ENCODE measurements at regions of chr11 and their contacts with region 1.

Region 1: DNA sequence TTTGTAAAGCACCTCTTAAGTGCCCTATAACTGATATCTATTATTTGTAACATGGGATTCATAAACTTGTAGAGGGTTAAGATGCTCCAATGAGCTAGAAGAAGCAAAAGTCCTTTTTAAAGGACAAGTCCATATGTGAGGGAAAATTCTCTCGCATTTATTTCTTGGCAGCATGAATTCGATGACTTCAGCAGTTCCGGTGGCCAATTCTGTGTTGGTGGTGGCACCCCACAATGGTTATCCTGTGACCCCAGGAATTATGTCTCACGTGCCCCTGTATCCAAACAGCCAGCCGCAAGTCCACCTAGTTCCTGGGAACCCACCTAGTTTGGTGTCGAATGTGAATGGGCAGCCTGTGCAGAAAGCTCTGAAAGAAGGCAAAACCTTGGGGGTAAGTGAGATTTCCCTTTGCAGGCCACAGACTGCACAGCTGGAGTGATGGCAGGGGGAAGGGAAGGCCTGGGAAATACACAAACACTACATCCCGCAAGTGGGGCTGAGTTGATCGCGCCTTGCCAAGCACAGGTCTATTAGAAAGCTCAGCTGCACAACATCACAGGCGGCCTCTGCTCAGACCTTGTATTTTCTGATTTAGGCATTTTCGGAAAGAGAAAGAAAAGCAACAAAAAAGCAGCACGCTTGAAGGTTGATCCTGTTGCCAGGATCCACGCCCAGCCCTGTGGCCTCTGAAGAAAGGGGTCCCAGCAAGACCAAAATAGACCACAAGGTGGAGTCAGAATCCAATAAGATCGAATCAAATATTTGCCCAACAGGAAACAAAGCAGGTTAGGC is 1.5 kb downstream of the MS4A8 start:
- DNase-seq: peak; percentile 56 to 75
- H3K4me3 ChIP-seq: no peak overlapping the region
- H3K4me3 Mint-ChIP-seq: no peak overlapping the region
- H3K27ac Mint-ChIP-seq: no peak overlapping the region
- H3K4me1 ChIP-seq: peaks cover 7% of the 10 kb centered on the region; the same call in 1 of the 2 replicates
- H3K4me1 Mint-ChIP-seq: peaks cover 16% of the 10 kb centered on the region
- H3K27me3 ChIP-seq: no peaks in the 10 kb centered on the region
- H3K27me3 Mint-ChIP-seq: no peaks in the 10 kb centered on the region
- CTCF ChIP-seq: peak; percentile 71 to 80

Region 2: GRCh38 chr11:60743058-60743457 is 42.2 kb after region 1 on chr11:
- CTCF ChIA-PET with region 1: interaction called, 3 read pairs
- POLR2A ChIA-PET with region 1: no interaction called
- intact Hi-C with region 1: loop called (anchors 1 kb)
- DNase-seq: no peak
- H3K4me3 ChIP-seq: no peak overlapping the region
- H3K4me3 Mint-ChIP-seq: no peak overlapping the region
- H3K27ac Mint-ChIP-seq: no peak overlapping the region
- H3K4me1 ChIP-seq: peaks cover 32% of the 10 kb centered on the region
- H3K4me1 Mint-ChIP-seq: peaks cover 15% of the 10 kb centered on the region
- H3K27me3 ChIP-seq: no peaks in the 10 kb centered on the region
- H3K27me3 Mint-ChIP-seq: no peaks in the 10 kb centered on the region
- CTCF ChIP-seq: peak in 1 of 2 experiments; percentile 31

Region 3: DNA sequence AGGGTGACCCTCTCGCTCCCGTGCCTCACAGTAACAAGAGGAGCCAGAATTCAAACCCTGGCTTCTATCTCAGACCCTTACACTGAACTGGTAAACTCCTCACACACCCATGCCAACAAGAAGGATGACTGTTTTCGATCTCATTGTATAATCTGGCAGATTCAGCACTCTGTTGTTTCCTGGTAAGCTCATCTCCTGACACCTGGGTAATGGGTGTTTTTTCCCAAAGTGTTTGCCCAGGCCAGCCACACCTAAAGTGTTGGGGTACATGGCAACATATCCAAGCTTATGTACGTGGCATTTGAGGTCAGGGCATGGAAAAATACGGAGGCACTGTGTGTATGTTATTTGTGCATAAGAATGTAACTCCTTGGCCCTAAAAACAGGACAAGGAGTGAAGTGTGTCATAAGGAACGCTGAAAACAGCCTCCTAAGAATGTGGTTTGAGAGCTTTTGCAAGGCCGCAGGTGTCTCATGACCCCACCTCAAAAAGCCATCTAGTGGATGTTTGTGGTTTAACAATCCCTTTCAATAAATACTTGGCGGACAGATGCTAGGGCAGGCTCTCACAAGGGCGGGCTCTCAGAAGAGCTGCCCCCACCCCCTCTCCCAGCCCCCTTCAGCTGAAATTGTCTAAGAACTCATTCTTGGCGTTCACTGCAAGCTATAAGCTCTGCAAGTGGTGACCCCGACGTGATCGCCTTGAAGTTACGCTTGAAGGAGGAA is 55.6 kb after region 1 on chr11 and contains the start of gene MS4A15:
- CTCF ChIA-PET with region 1: interaction called, 15 read pairs
- POLR2A ChIA-PET with region 1: no interaction called
- intact Hi-C with region 1: loop called (anchors 1 kb)
- DNase-seq: peak; percentile 52 to 61
- H3K4me3 ChIP-seq: no peak within 1 kb of the TSS
- H3K4me3 Mint-ChIP-seq: no peak within 1 kb of the TSS
- H3K27ac Mint-ChIP-seq: peak within 1 kb of the TSS; percentile 44
- H3K4me1 ChIP-seq: peaks cover 30% of the 10 kb centered on the region
- H3K4me1 Mint-ChIP-seq: peaks cover 22% of the 10 kb centered on the region
- H3K27me3 ChIP-seq: no peaks in the 10 kb centered on the region
- H3K27me3 Mint-ChIP-seq: no peaks in the 10 kb centered on the region
- CTCF ChIP-seq: peak; percentile 31 to 51
- total RNA-seq, gene MS4A15: not detected in 2 replicates

Region 4: GRCh38 chr11:60762851-60763691 is 62.2 kb after region 1 on chr11:
- CTCF ChIA-PET with region 1: interaction called, 15 read pairs
- POLR2A ChIA-PET with region 1: no interaction called
- intact Hi-C with region 1: loop called (anchors 1 kb)
- DNase-seq: peak in 1 of 2 experiments; percentile 44
- H3K4me3 ChIP-seq: no peak overlapping the region
- H3K4me3 Mint-ChIP-seq: no peak overlapping the region
- H3K27ac Mint-ChIP-seq: no peak overlapping the region
- H3K4me1 ChIP-seq: peaks cover 18% of the 10 kb centered on the region
- H3K4me1 Mint-ChIP-seq: peaks cover 19% of the 10 kb centered on the region
- H3K27me3 ChIP-seq: no peaks in the 10 kb centered on the region
- H3K27me3 Mint-ChIP-seq: no peaks in the 10 kb centered on the region
- CTCF ChIP-seq: peak; percentile 47 to 52

Region 5: GRCh38 chr11:60831143-60831500 is 130.2 kb after region 1 on chr11:
- CTCF ChIA-PET with region 1: no interaction called
- POLR2A ChIA-PET with region 1: no interaction called
- intact Hi-C with region 1: loop called (anchors 2 kb)
- DNase-seq: peak; percentile 70 to 83
- H3K4me3 ChIP-seq: no peak overlapping the region
- H3K4me3 Mint-ChIP-seq: no peak overlapping the region
- H3K27ac Mint-ChIP-seq: no peak overlapping the region
- H3K4me1 ChIP-seq: no peaks in the 10 kb centered on the region
- H3K4me1 Mint-ChIP-seq: no peaks in the 10 kb centered on the region
- H3K27me3 ChIP-seq: no peaks in the 10 kb centered on the region
- H3K27me3 Mint-ChIP-seq: peaks cover 3% of the 10 kb centered on the region
- CTCF ChIP-seq: peak; percentile 92 to 94

Region 6: GRCh38 chr11:60887556-60887955 is 186.7 kb after region 1 on chr11:
- CTCF ChIA-PET with region 1: interaction called, 5 read pairs
- POLR2A ChIA-PET with region 1: no interaction called
- intact Hi-C with region 1: loop called (anchors 1 kb)
- DNase-seq: peak; percentile 67 to 75
- H3K4me3 ChIP-seq: no peak overlapping the region
- H3K4me3 Mint-ChIP-seq: no peak overlapping the region
- H3K27ac Mint-ChIP-seq: no peak overlapping the region
- H3K4me1 ChIP-seq: no peaks in the 10 kb centered on the region
- H3K4me1 Mint-ChIP-seq: peaks cover 7% of the 10 kb centered on the region
- H3K27me3 ChIP-seq: no peaks in the 10 kb centered on the region
- H3K27me3 Mint-ChIP-seq: no peaks in the 10 kb centered on the region
- CTCF ChIP-seq: peak; percentile 72 to 87

Measured in Caco-2 (cell line).